Activated CD4-positive, alpha-beta T cell treated with anti-CD3 and anti-CD28 coated beads for 36 hours (primary cell): ENCODE measurements at regions of chr2 and their contacts with region 1.

Region 1: GRCh38 chr2:10448208-10448645 is at the start of gene ODC1:
- DNase-seq: peak; percentile 97
- ATAC-seq: peak; percentile 74
- H3K4me3 Mint-ChIP-seq: peak within 1 kb of the TSS; percentile 85
- H3K27ac Mint-ChIP-seq: peak within 1 kb of the TSS; percentile 95
- H3K4me1 Mint-ChIP-seq: peaks cover 51% of the 10 kb centered on the region
- H3K27me3 Mint-ChIP-seq: no peaks in the 10 kb centered on the region
- total RNA-seq, gene ODC1: 158 to 170 TPM

Region 2: DNA sequence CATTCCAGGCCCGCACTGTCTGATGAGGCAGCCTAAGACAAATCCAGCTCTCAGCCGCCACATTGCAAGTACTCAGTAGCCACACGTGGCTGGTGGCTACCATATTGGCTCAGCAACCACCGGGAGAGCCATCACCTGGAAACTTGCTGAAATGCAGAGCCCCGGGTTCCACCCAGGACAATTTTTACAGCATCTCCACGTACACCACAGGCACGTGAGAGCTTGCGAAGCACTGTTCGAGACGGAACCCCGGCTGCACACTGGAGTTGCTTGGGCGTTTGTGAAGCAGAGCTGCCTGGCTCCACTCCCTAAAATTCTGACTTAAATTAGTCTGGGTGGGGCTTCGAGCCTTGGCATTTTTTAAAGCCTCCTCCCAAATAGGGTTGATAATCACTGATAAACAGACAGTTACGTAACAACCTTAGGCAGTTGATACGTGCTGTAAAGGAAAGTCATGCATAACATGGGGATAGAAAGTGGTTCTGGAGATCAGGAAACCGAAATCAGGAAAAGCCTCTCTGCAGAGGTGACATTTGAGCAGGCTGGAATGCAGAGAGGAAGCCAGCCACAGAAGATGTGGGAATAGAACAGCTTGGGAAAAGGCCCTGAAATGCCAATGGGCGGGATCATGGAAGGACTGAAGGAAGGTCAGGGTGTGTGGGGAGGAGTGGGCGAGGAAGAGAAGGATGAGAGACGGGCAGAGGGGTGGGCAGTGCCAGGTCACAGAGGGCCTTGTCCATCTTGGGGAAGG is 1235.4 kb before region 1 on chr2:
- CTCF ChIA-PET with region 1: no interaction called
- POLR2A ChIA-PET with region 1: no interaction called
- intact Hi-C with region 1: no loop called
- DNase-seq: no peak
- ATAC-seq: no peak
- H3K4me3 Mint-ChIP-seq: no peak overlapping the region
- H3K27ac Mint-ChIP-seq: no peak overlapping the region
- H3K4me1 Mint-ChIP-seq: peaks cover 3% of the 10 kb centered on the region
- H3K27me3 Mint-ChIP-seq: peaks cover 39% of the 10 kb centered on the region

Region 3: DNA sequence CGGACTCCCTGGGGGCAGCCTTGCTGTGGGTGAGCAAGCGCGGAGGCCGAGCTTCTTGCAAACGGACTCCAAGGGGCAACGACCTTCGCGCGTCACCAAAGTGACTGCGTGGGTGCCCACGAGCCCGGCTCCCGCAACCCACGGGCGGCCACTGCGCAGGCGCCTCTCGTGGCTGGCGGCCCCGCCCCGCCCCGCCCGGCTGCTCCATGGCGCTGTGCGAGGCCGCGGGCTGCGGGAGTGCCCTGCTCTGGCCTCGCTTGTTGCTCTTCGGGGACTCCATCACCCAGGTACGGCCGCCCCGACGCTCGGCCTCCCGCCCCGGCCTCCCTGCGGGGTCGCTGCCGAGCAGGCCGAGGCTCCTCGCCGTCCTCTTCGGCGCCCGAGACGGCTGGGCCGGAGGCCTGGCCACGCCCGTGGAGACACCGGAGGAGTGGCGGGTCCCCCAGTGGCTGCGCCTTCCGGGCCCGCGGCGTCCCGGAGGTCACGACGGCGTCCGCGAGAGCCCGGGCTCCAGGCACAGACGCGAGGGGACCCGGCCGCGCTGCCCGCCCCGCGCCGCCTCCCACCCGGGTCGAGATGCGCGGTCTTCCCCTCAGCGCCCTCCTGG is 973.8 kb before region 1 on chr2 and contains the start of gene IAH1:
- CTCF ChIA-PET with region 1: no interaction called
- POLR2A ChIA-PET with region 1: no interaction called
- intact Hi-C with region 1: loop called in 1 of 2 experiments (anchors 10 kb)
- DNase-seq: peak; percentile 81
- ATAC-seq: peak; percentile 81
- H3K4me3 Mint-ChIP-seq: peak within 1 kb of the TSS; percentile 79
- H3K27ac Mint-ChIP-seq: peak within 1 kb of the TSS; percentile 75
- H3K4me1 Mint-ChIP-seq: peaks cover 42% of the 10 kb centered on the region
- H3K27me3 Mint-ChIP-seq: no peaks in the 10 kb centered on the region
- total RNA-seq, gene IAH1: 53.7 to 63.7 TPM

Region 4: DNA sequence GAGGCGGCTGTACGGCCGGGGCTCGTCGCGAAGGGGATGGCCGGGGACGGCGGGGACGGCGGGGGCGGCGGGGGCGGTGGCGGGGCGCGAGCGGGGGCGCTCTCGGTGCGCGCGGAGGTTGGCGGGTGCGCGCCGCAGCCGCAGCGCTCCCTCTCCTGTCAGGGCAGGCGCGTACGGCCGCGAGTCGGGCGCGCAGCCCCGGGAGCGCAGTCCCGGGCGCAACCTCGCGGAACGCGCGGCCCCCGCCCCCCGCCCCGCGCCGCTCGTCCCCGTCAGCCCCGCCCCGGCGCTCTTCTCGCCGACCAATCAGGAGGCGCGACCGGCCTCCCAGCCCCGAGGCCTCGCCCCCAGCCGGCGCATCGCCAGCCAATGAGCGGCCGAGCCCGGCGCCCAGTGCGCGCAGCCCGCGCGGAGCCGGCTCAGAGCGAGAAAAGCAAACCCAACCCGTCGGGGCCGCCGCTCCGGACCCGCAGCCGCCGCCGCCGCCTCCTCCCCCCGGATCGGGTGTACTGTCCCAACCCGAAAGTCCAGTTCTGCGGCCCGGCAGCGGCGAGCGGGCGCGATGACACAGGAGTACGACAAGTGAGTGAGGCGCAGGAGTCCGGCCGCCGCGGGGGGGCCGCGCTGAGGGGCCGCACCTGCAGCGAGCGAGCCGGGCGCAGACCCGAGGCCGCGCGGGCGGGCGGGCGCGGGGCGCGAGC is 496.8 kb before region 1 on chr2 and contains the start of gene GRHL1:
- CTCF ChIA-PET with region 1: no interaction called
- POLR2A ChIA-PET with region 1: no interaction called
- intact Hi-C with region 1: loop called in 1 of 2 experiments (anchors 1 kb)
- DNase-seq: peak; percentile 95
- ATAC-seq: peak; percentile 98
- H3K4me3 Mint-ChIP-seq: peak within 1 kb of the TSS; percentile 68
- H3K27ac Mint-ChIP-seq: no peak within 1 kb of the TSS
- H3K4me1 Mint-ChIP-seq: peaks cover 4% of the 10 kb centered on the region
- H3K27me3 Mint-ChIP-seq: peaks cover 39% of the 10 kb centered on the region
- total RNA-seq, gene GRHL1: 0.27 to 0.53 TPM

Region 5: DNA sequence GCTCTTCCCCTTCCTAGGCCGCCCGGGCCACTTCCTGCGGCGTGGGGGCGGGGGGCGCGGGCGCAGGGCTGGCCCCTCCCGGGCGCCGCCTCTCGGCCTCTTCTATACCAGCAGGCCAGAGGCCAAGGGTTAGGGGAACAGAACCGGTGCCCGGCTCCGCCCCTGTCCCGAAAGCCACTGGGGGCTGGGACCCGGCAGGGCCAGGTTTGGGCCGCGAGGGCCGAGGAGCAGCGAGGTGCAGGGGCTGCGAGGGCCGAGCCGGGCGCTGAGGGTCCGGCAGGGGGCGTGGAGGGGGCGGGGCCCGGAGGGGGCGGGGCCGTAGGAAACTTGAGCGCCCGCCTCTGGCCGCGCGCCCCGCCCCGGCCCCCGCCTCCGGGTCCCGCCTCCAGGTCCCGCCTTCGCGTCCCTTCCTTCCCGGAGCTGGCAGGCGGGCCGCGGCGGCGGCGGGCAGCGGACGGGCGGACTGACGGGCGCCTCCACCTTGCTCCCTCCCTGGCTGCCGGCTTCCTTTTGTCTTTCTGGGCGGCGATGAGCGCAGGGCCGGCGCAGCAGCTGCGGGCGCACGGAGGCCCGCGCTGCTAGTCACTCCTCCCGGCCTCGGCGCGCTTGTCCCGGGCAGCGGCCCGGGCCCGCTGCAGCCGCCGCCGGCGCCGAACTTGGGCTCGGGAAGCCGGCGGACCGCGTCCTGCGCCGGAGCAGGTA is 145.6 kb before region 1 on chr2 and contains the start of gene HPCAL1:
- CTCF ChIA-PET with region 1: interaction called, 3 read pairs
- POLR2A ChIA-PET with region 1: interaction called, 9 read pairs
- intact Hi-C with region 1: loop called (anchors 1 to 2 kb)
- DNase-seq: peak; percentile 91
- ATAC-seq: peak; percentile 72
- H3K4me3 Mint-ChIP-seq: peak within 1 kb of the TSS; percentile 100
- H3K27ac Mint-ChIP-seq: peak within 1 kb of the TSS; percentile 89
- H3K4me1 Mint-ChIP-seq: peaks cover 65% of the 10 kb centered on the region
- H3K27me3 Mint-ChIP-seq: no peaks in the 10 kb centered on the region
- total RNA-seq, gene HPCAL1: 109 to 114 TPM

Region 6: DNA sequence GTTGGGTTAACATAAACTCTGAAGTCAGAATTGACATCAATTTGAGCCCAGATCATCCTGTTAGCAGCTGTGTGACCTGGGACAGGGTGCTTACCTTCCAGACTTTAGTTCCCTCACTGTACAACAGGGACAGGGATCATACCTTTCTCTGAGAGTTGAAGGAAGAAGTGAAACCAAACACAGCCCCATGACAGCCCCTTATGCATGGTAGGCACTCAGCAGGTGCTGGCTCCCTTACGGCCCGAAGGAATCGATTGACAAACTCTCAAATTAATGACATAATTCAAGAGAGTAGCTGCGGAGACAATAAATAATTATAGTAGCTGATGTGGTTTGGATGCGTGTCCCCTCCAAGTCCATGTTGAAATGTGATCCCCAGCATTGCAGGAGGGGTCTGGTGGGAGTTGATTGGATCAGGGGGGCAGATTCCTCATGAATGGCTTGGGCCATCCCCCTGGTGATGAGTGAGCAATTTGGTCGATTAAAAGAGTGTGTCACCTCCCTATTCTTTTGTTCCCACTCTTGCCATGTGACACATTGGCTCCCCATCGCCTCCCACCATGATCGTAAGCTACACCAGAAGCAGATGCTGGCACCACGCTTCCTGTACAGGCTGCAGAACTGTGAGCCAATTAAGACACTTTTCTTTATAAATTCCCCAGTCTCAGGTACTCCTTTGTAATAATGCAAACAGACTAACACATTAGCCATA is 72.5 kb before region 1 on chr2:
- CTCF ChIA-PET with region 1: no interaction called
- POLR2A ChIA-PET with region 1: no interaction called
- intact Hi-C with region 1: no loop called
- DNase-seq: peak; percentile 59
- ATAC-seq: peak; percentile 56
- H3K4me3 Mint-ChIP-seq: no peak overlapping the region
- H3K27ac Mint-ChIP-seq: peak overlapping the region; percentile 63
- H3K4me1 Mint-ChIP-seq: peaks cover 73% of the 10 kb centered on the region
- H3K27me3 Mint-ChIP-seq: no peaks in the 10 kb centered on the region

Region 7: GRCh38 chr2:10493636-10494281 is 45.5 kb after region 1 on chr2:
- CTCF ChIA-PET with region 1: interaction called, 3 read pairs
- POLR2A ChIA-PET with region 1: interaction called, 5 read pairs
- intact Hi-C with region 1: loop called (anchors 1 kb)
- DNase-seq: peak; percentile 94
- ATAC-seq: peak; percentile 96
- H3K4me3 Mint-ChIP-seq: no peak overlapping the region
- H3K27ac Mint-ChIP-seq: peak overlapping the region; percentile 78
- H3K4me1 Mint-ChIP-seq: peaks cover 34% of the 10 kb centered on the region
- H3K27me3 Mint-ChIP-seq: peaks cover 2% of the 10 kb centered on the region

Region 8: DNA sequence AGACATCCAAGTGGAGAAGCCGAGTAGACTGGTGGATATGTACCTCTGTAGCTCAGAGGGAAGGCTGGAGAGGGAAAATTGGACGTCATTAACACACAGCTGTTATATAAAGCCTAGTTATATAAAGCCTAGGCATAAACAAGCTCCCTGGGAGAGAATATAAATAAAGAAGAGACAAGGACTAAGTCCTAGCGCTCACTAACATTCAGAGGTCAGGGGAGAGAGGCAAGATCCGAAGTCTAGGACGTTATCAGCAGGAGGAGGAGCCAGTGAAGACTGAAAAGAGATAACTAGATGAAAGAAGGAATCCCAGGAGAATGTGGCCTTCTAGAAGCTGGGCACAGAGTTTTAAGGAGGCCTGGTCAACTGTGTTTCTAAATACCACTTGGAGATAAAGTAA is 186.3 kb after region 1 on chr2:
- CTCF ChIA-PET with region 1: no interaction called
- POLR2A ChIA-PET with region 1: no interaction called
- intact Hi-C with region 1: no loop called
- DNase-seq: no peak
- ATAC-seq: no peak
- H3K4me3 Mint-ChIP-seq: no peak overlapping the region
- H3K27ac Mint-ChIP-seq: no peak overlapping the region
- H3K4me1 Mint-ChIP-seq: peaks cover 11% of the 10 kb centered on the region
- H3K27me3 Mint-ChIP-seq: no peaks in the 10 kb centered on the region

Region 9: DNA sequence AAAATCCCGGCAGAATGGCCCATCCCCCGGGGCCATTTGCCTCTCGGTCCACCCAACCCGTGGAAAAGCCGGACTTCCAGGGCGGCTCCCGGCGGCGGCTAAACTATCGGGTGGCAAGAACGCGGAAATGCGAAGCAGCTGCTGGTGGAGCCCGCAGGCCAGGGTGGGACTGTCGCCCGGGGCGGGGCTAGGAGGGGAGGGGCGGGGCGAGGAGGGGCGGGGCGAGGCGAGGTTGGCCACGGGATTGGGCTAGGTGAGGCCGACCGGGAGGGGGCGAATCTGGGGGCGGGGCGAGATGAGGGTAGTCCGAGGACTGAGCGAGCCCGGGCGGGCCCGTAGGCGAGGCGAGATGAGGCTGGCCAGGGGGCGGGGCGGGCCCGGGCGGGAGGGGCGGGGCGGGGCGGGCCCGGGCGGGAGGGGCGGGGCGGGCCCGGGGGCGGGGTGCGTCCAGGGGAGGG is 706.7 kb after region 1 on chr2:
- CTCF ChIA-PET with region 1: no interaction called
- POLR2A ChIA-PET with region 1: no interaction called
- intact Hi-C with region 1: loop called in 1 of 2 experiments (anchors 2 kb)
- DNase-seq: peak; percentile 100
- ATAC-seq: peak; percentile 95
- H3K4me3 Mint-ChIP-seq: peak overlapping the region; percentile 73
- H3K27ac Mint-ChIP-seq: peak overlapping the region; percentile 83
- H3K4me1 Mint-ChIP-seq: peaks cover 15% of the 10 kb centered on the region
- H3K27me3 Mint-ChIP-seq: no peaks in the 10 kb centered on the region